ENCODE measurements at regions of chr6 and their contacts with region 1.

Region 1: DNA sequence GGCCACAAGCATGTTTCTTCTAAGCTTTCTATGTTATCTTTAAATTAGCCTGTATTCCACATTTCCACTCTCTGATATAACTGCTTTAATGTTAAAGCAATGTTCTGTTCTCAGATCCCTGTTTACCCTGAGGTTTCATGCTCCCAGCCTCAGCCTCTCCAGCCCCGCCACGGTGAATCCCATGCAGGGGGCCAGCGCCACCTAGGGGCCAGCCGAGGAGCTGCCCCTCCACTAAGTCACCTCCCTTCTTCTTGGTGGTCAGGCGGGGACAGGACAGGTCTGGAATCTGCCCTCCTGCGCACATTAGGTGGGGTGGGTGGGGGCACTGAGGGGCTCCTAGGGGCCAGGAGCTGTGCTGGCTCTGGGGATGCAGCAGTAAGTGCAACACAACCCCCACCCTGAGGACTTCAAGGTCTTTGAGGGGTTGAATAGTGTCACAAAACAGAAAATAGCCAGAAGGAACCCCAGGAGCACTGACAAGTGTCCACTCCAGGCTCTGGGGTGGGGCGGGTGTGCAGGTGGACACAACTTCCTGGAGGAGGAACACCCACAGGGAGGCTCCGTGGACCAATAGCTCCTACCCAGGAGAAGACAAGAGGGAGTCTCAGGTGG is 61.6 kb downstream of the RAB44 start:
- DNase-seq: peak; percentile 58
- H3K4me3 ChIP-seq: no peak overlapping the region
- H3K27ac ChIP-seq: no peak overlapping the region
- H3K4me1 ChIP-seq: peaks cover 4% of the 10 kb centered on the region
- H3K27me3 ChIP-seq: no peaks in the 10 kb centered on the region
- CTCF ChIP-seq: peak; percentile 93 to 98

Region 2: DNA sequence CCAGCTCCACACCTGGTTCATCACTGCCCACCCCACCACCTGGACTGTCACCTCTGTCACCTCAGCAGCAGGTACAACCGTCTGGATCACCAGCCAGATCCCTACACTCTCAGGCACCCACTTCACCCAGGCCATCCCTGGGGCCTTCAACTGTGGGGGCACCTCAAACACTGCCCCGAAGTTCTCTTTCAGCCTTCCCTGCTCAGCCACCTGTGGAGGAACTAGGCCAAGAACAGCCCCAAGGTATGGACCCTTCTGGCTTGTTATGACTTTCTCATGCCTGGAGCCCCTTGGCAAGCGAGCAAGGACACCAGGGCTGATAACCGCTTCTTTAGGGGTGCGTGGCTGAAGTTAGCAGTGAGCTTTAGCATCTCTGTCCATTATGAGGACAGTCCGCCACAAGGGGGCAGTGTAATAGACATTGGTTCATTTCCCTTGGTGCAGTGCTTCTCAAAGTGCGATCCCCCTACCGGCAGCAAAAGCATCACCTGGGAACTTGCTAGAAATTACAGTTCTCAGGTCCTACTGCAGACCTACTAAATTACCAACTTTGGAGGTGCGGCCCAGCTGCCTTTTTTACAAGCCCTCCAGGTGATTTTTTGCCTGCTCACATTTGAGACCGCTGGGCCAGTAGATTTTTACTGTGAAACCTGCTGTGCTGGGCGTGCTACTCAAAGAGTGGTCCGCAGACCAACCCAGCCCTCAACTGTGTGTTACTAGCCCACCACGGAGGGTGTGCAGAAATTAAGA is 456.9 kb before region 1 on chr6:
- CTCF ChIA-PET with region 1: no interaction called
- dilution Hi-C with region 1: no loop called
- in situ Hi-C with region 1: no loop called
- intact Hi-C with region 1: loop called (anchors 5 kb)
- DNase-seq: peak; percentile 78
- H3K4me3 ChIP-seq: no peak overlapping the region
- H3K27ac ChIP-seq: no peak overlapping the region
- H3K4me1 ChIP-seq: no peaks in the 10 kb centered on the region
- H3K27me3 ChIP-seq: no peaks in the 10 kb centered on the region
- CTCF ChIP-seq: peak; percentile 98 to 99

Region 3: GRCh38 chr6:36423101-36423824 is 336.0 kb before region 1 on chr6:
- CTCF ChIA-PET with region 1: no interaction called
- dilution Hi-C with region 1: no loop called
- in situ Hi-C with region 1: no loop called
- intact Hi-C with region 1: loop called (anchors 2 kb)
- DNase-seq: peak; percentile 98
- H3K4me3 ChIP-seq: peak overlapping the region; percentile 53 to 62 (median 55)
- H3K27ac ChIP-seq: peak overlapping the region; percentile 77
- H3K4me1 ChIP-seq: peaks cover 39% of the 10 kb centered on the region
- H3K27me3 ChIP-seq: no peaks in the 10 kb centered on the region
- CTCF ChIP-seq: peak; percentile 44 to 78

Region 4: DNA sequence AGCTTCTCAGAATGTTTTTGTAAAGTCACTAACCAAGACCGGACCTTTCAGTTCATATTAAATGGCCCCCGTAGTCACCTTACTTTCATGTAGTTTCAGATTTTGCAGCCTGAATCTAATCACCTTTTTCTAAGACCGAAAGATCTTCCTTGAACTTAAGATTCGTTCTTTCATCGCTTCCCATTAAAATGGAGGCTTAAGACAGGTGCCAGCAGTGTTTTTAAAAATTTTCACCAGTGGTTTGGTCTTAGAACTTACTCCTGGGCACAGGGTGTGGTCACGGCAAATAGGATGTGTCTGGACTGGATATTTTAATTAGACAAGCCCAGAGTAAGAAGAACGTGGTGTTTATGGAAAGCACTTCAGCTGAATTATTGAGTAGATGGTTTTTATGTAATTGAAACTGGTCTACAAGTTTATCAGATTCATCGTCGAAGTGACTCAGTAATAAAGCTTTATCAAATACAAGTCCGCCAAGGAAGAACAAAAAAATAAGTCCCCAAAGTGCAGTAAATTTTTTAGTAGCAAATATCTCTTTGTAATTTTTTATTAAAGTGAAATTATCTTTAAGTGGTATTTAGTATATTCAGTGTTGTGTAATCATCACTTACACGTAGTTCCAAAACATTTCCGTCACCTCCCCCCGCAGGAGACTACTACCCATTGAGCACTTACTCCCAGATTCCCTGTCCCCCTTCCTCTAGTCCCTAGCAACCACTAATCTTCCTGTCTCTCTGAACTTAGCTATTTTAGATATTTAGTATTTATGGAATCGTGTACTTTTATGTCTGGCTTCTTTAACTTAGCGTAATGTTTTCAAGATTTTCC is 164.2 kb before region 1 on chr6:
- CTCF ChIA-PET with region 1: no interaction called
- dilution Hi-C with region 1: no loop called
- in situ Hi-C with region 1: no loop called
- intact Hi-C with region 1: no loop called
- DNase-seq: peak; percentile 38
- H3K4me3 ChIP-seq: peak overlapping the region; percentile 68 to 99 (median 92)
- H3K27ac ChIP-seq: peak overlapping the region; percentile 97
- H3K4me1 ChIP-seq: peaks cover 42% of the 10 kb centered on the region
- H3K27me3 ChIP-seq: no peaks in the 10 kb centered on the region
- CTCF ChIP-seq: no peak

Region 5: GRCh38 chr6:36615018-36615761 is 144.1 kb before region 1 on chr6:
- CTCF ChIA-PET with region 1: no interaction called
- dilution Hi-C with region 1: no loop called
- in situ Hi-C with region 1: loop called in 1 of 2 experiments (anchors 10 kb)
- intact Hi-C with region 1: loop called (anchors 1 kb)
- DNase-seq: peak; percentile 65
- H3K4me3 ChIP-seq: no peak overlapping the region
- H3K27ac ChIP-seq: no peak overlapping the region
- H3K4me1 ChIP-seq: peaks cover 15% of the 10 kb centered on the region
- H3K27me3 ChIP-seq: no peaks in the 10 kb centered on the region
- CTCF ChIP-seq: peak; percentile 82 to 83

Region 6: GRCh38 chr6:36678518-36679027 is 80.7 kb before region 1 on chr6 and contains the start of gene CDKN1A:
- CTCF ChIA-PET with region 1: interaction called, 6 read pairs
- dilution Hi-C with region 1: loop called (anchors 5 kb)
- in situ Hi-C with region 1: no loop called
- intact Hi-C with region 1: loop called (anchors 1 kb)
- DNase-seq: peak; percentile 94
- H3K4me3 ChIP-seq: peak within 1 kb of the TSS; percentile 91 to 98 (median 96)
- H3K27ac ChIP-seq: peak within 1 kb of the TSS; percentile 93
- H3K4me1 ChIP-seq: peaks cover 59% of the 10 kb centered on the region
- H3K27me3 ChIP-seq: no peaks in the 10 kb centered on the region
- CTCF ChIP-seq: no peak
- total RNA-seq, gene CDKN1A: 687 to 707 TPM

Region 7: GRCh38 chr6:36724514-36725390 is 34.5 kb before region 1 on chr6:
- CTCF ChIA-PET with region 1: no interaction called
- dilution Hi-C with region 1: no loop called
- in situ Hi-C with region 1: no loop called
- intact Hi-C with region 1: loop called (anchors 1 kb)
- DNase-seq: peak; percentile 63
- H3K4me3 ChIP-seq: no peak overlapping the region
- H3K27ac ChIP-seq: no peak overlapping the region
- H3K4me1 ChIP-seq: peaks cover 18% of the 10 kb centered on the region
- H3K27me3 ChIP-seq: no peaks in the 10 kb centered on the region
- CTCF ChIP-seq: peak; percentile 78 to 80

Region 8: DNA sequence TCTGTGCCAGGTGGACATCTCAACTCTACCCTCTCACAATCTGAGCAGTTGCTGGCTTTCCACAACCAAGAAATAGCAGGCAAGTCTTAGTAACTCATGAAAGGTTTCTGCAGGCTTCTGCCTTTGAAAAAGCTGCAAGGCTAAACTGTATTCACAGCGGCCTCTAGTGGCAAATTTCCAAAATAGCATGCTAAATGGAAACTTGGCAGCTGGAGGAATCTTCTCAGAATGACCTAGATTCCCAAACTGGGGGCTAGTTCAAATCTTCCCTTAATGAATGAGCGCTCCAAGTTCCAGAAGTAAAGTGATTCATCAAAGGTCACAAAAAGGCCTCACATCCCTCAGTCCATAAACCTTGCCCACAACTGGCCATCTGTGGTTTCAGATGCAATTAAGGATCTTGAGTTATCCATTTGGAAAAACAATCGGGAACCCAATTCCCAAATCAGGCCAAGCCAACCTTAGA is 91.9 kb after region 1 on chr6:
- CTCF ChIA-PET with region 1: interaction called, 3 read pairs
- dilution Hi-C with region 1: loop called (anchors 5 kb)
- in situ Hi-C with region 1: no loop called
- intact Hi-C with region 1: no loop called
- DNase-seq: peak; percentile 58
- H3K4me3 ChIP-seq: no peak overlapping the region
- H3K27ac ChIP-seq: no peak overlapping the region
- H3K4me1 ChIP-seq: peaks cover 28% of the 10 kb centered on the region
- H3K27me3 ChIP-seq: no peaks in the 10 kb centered on the region
- CTCF ChIP-seq: peak; percentile 83 to 85